ENCODE measurements at regions of chr11 and their contacts with region 1.

Region 1: DNA sequence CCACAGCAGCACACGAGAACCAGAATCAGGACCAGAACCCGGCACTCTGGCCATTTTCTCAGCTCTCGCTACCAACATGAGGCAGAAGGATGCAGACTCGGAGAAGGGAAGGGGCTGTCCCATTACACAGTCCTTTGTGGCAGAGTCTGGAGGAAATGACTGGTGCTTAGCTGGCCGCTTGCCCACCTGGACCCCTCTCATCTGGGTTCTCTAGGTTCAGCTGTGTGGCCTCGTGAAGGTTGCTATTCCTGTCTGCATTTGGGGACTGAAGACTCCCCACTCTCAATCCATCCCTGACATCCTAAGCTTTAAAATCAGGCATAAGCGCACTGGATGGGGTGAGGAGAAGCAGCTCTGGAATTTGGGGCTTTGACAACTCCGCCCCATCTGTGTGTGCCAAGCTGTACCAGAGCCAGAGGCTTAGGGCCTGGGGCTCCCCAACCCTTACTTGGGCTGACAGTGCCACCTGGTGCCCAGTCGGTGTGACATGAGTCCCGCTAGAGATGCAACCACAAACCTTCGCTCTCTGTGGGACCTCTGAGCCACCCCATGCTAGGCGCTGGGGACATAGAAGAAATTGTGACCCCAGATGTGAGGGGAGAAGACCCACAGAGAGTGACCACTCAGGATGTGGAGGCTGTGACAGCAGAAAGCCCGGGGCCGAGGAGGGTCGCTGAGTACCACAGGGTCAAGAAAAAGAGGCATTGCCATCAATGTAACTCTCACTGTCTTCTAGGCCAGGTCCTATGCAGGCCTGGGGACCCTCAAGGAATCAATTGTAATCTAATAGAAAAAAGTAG is 35.9 kb upstream of the FCHSD2 start:
- DNase-seq: peak; percentile 85 to 94
- H3K4me3 ChIP-seq: no peak overlapping the region
- H3K27ac ChIP-seq: peak overlapping the region; percentile 64 to 82
- H3K4me1 ChIP-seq: peaks cover 0 to 54% (median 39%) of the 10 kb centered on the region in 4 donors
- H3K27me3 ChIP-seq: no peaks in the 10 kb centered on the region
- CTCF ChIP-seq: peak; percentile 77 to 97

Region 2: DNA sequence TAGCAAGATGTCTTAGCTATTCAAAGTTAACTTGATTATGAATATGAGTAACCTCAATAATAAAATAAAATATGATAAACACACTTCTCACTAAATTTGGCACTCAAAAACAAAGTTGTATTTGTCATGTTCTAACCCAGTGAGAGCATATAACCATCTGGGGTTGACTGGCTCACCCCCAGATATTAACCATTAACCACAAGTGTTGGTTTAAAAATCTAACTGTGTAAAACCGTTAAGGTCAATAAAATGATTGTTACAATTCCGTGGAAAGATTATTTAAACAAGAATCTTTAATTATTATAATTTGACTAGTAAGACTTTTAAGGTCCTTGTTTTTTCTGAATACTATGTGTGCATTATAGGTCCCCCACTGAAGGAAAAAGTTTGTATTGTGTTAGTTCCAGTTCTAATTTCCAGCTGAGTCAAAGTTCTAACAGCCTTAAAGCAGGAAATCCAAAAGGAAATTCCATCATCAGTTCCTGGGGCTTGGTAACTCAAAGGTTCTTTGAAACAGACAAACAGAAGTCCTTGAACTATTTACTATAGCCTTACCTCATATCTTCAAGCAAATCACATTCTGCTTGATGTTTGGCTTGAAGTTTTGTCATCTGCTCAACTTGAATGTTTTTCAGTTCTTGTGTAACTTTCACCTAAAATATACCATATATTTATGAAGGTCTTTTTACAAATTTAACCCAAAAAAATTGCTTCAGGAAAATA is 38.3 kb before region 1 on chr11:
- intact Hi-C with region 1: no loop called
- DNase-seq: no peak
- H3K4me3 ChIP-seq: peak overlapping the region; percentile 79 to 83
- H3K27ac ChIP-seq: peak overlapping the region; percentile 94
- H3K4me1 ChIP-seq: peaks cover 0 to 65% (median 31%) of the 10 kb centered on the region in 4 donors
- H3K27me3 ChIP-seq: no peaks in the 10 kb centered on the region
- CTCF ChIP-seq: no peak

Region 3: DNA sequence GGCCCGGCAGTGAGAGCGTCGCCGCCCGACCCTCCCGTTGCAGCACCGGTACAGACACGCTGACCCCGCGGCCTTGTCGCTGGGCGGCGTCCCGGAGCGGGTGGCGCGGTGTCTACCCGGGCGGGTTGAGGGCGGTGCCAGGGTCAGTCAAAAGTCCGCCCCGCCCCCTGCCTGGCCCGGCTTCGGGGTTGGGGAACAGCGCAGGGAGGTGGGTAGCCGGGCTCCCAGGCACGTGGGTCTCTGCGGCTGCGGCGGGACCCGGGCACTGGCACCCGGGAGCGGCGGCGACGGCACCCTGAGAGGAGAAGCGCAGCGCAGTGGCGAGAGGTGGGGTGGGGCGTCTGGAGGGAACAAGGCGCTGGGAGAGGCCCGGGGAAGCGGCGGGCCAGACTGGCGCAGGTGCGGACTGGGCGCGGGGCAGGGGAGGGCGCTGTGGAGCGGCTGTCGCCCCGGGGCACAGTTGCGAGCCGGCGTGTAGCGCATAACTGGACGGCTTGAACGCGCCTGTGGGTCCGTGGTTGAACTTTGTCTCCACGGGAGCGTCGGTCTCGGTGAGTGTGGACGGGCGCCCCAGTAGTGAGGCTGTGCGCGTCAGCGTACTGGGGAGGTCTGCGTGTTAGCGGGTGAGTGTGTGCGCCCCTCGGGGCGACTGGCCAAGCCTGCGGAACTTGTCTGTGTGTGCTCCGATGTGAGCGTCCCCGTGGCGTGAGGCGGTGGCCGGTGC is 40.3 kb after region 1 on chr11 and contains the start of gene P2RY2:
- intact Hi-C with region 1: no loop called
- DNase-seq: peak; percentile 50 to 87
- H3K4me3 ChIP-seq: peak within 1 kb of the TSS; percentile 51 to 60
- H3K27ac ChIP-seq: peak within 1 kb of the TSS; percentile 6 to 10
- H3K4me1 ChIP-seq: peaks cover 0 to 32% (median 14%) of the 10 kb centered on the region in 4 donors
- H3K27me3 ChIP-seq: no peaks in the 10 kb centered on the region
- CTCF ChIP-seq: peak; percentile 56 to 61

Region 4: DNA sequence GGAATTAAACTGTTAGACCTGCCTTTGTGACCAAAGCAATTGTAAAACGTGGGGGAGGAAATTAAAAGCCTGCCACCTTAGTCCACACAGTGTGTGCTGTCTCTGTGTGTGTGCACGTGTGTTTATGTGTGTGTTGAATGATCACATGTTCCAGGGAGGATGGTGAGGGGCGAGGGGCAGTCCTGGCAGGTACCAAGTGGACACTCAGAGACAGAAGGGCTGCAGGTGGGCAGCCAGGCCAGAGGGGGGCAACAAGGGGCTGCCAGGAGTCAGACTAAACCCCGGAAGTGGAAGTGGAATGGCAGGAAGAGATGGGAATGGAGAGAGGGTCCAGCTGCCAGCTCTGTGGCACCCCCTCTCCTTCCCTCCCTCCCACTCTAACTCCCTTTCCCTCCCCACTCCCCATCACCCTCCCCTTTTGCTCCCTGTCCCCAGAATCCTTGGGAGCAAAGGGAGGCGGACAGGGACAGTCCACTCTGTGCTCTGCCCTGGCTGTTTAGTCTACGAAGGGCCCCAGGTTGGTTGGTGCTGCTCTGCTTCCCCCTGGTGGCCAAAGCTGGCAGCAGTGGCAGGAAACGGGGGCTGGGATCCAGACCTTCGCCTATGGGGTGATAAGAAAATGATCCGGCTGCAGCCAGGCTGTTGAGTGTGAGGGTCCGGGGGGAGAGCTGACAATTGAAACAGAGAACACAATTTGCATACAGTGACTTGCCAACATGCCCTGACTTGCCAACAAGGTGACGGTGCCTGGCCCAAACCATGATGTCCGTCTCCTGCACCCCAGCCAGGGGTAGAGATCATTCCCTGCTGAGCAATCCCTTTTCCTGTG is 64.5 kb after region 1 on chr11:
- intact Hi-C with region 1: loop called (anchors 1 kb)
- DNase-seq: peak; percentile 52 to 86
- H3K4me3 ChIP-seq: peak overlapping the region in 1 of 2 donors; percentile 22
- H3K27ac ChIP-seq: peak overlapping the region; percentile 2 to 36
- H3K4me1 ChIP-seq: peaks cover 0 to 61% (median 30%) of the 10 kb centered on the region in 4 donors
- H3K27me3 ChIP-seq: no peaks in the 10 kb centered on the region
- CTCF ChIP-seq: peak; percentile 81 to 89